ENCODE measurements at regions of chr14 and their contacts with region 1.

Region 1: GRCh38 chr14:75258615-75259466 is 19.8 kb upstream of the FOS start:
- DNase-seq: peak; percentile 99
- H3K4me3 Mint-ChIP-seq: peak overlapping the region; percentile 67
- H3K27ac Mint-ChIP-seq: peak overlapping the region; percentile 100
- H3K4me1 Mint-ChIP-seq: peaks cover 40% of the 10 kb centered on the region
- H3K27me3 Mint-ChIP-seq: no peaks in the 10 kb centered on the region
- CTCF ChIP-seq: no peak

Region 2: DNA sequence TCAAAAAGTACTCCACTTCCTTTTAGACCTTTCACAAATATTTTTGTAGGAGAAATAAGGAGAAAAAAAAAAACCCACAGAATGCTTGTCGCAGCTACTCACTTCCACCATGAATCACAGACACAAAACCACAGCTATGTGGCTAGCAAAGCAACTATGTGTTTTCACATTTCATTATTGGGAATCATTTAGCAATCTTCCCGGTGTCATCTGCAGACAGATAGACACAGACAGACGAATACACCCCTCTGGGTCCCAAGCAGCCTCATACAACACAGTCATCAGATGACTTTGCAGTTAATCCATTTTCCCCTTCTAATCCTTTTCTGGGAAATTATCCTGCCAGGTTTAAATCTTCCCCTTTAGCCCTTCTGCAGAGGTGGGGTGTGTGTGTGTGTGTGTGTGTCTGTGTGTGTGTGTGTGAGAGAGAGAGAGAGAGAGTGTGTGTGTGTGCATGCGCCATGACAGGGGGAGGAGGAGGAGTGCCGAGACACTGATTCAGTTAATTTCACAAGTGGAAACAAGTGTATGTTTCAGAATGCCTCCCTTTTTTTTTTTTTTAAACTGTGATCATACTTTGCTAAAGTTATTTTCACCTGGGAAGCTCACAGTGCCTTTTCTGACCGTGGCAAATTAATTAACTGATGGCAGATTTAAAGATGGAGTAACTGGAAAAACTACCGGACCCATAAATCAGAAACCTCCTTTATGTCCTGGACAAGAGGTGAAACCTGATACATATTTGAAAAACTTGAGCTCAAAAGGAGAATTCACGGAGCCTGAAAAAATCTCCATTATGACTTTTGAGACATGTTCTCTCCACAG is 686.7 kb before region 1 on chr14:
- CTCF ChIA-PET with region 1: no interaction called
- POLR2A ChIA-PET with region 1: interaction called, 3 read pairs
- intact Hi-C with region 1: loop called (anchors 10 kb)
- DNase-seq: peak; percentile 97
- H3K4me3 Mint-ChIP-seq: peak overlapping the region; percentile 67
- H3K27ac Mint-ChIP-seq: peak overlapping the region; percentile 92
- H3K4me1 Mint-ChIP-seq: peaks cover 69% of the 10 kb centered on the region
- H3K27me3 Mint-ChIP-seq: no peaks in the 10 kb centered on the region
- CTCF ChIP-seq: no peak

Region 3: GRCh38 chr14:75132382-75133086 is 126.3 kb before region 1 on chr14:
- CTCF ChIA-PET with region 1: interaction called, 3 read pairs
- POLR2A ChIA-PET with region 1: interaction called, 85 read pairs
- intact Hi-C with region 1: no loop called
- DNase-seq: peak; percentile 83
- H3K4me3 Mint-ChIP-seq: no peak overlapping the region
- H3K27ac Mint-ChIP-seq: peak overlapping the region; percentile 77
- H3K4me1 Mint-ChIP-seq: peaks cover 33% of the 10 kb centered on the region
- H3K27me3 Mint-ChIP-seq: no peaks in the 10 kb centered on the region
- CTCF ChIP-seq: peak; percentile 67

Region 4: GRCh38 chr14:75182841-75183624 is 75.8 kb before region 1 on chr14:
- CTCF ChIA-PET with region 1: no interaction called
- POLR2A ChIA-PET with region 1: interaction called, 16 read pairs
- intact Hi-C with region 1: no loop called
- DNase-seq: peak; percentile 71
- H3K4me3 Mint-ChIP-seq: peak overlapping the region; percentile 21
- H3K27ac Mint-ChIP-seq: peak overlapping the region; percentile 57
- H3K4me1 Mint-ChIP-seq: peaks cover 20% of the 10 kb centered on the region
- H3K27me3 Mint-ChIP-seq: no peaks in the 10 kb centered on the region
- CTCF ChIP-seq: no peak

Region 5: DNA sequence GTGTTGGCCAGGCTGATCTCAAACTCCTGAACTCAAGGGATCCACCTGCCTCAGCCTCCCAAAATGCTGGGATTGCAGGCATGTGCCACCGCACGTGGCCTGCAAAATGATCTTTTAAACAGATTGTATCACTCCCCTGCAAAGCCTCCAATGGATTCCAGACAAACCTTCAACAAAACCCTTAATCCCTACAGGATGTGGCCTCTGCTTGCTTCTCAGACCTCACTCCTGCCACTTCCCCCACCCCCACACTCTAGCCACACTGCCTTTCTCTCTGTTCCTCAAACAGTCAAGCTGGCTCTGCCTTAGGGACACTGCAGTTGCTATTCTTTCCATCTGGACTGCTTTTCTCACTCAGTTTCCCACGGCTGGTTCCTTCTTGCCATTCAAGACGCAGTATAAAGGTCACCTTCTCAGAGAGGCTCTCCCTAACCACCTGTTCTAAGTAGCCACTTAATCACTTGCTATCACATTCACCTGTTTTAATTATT is 35.1 kb before region 1 on chr14:
- CTCF ChIA-PET with region 1: no interaction called
- POLR2A ChIA-PET with region 1: interaction called, 35 read pairs
- intact Hi-C with region 1: no loop called
- DNase-seq: no peak
- H3K4me3 Mint-ChIP-seq: no peak overlapping the region
- H3K27ac Mint-ChIP-seq: no peak overlapping the region
- H3K4me1 Mint-ChIP-seq: peaks cover 34% of the 10 kb centered on the region
- H3K27me3 Mint-ChIP-seq: no peaks in the 10 kb centered on the region
- CTCF ChIP-seq: no peak

Region 6: DNA sequence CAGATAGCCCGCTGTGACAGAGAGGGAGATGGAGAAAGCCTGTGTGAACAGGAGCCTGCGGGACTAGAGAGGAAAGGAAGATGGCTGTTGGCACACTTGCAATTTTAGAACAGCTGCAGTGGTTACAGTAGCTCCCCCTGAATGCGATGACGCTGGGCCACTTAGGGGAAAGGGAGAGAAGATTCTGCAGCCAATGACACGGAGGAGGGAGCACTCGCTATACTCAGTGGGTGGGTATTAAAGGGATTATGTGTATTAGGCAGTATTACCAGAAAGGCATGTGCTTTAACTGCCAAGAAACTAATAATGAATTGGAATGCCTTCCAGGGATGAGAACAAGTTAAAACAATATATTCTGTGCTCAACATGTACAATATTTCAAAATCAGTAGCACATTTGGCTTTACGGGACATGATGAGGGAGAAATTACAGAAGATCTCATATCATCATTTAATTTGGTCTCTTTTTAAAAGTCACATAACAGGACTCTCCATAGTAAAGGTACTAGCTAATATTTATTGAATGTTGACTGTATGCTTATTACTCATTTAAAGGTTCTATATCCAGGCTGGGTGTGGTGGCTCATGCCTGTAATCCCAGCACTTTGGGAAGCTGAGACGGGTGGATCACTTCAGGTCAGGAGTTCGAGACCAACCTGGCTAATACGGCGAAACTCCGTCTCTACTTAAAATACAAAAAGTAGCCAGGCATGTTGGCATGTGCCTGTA is 16.1 kb before region 1 on chr14:
- CTCF ChIA-PET with region 1: interaction called, 8 read pairs
- POLR2A ChIA-PET with region 1: interaction called, 150 read pairs
- intact Hi-C with region 1: no loop called
- DNase-seq: peak; percentile 95
- H3K4me3 Mint-ChIP-seq: peak overlapping the region; percentile 2
- H3K27ac Mint-ChIP-seq: peak overlapping the region; percentile 57
- H3K4me1 Mint-ChIP-seq: peaks cover 10% of the 10 kb centered on the region
- H3K27me3 Mint-ChIP-seq: no peaks in the 10 kb centered on the region
- CTCF ChIP-seq: no peak

Region 7: GRCh38 chr14:76056128-76056527 is 797.3 kb after region 1 on chr14:
- CTCF ChIA-PET with region 1: no interaction called
- POLR2A ChIA-PET with region 1: no interaction called
- intact Hi-C with region 1: no loop called
- DNase-seq: peak; percentile 25
- H3K4me3 Mint-ChIP-seq: no peak overlapping the region
- H3K27ac Mint-ChIP-seq: no peak overlapping the region
- H3K4me1 Mint-ChIP-seq: no peaks in the 10 kb centered on the region
- H3K27me3 Mint-ChIP-seq: no peaks in the 10 kb centered on the region
- CTCF ChIP-seq: peak; percentile 23